Activated CD4-positive, alpha-beta T cell treated with anti-CD3 and anti-CD28 coated beads, Interleukin-2, amount 10 ng/mL, durations not matched to agents 7 days and 5 days (primary cell): ENCODE measurements at regions of chr5 and their contacts with region 1.

Region 1: DNA sequence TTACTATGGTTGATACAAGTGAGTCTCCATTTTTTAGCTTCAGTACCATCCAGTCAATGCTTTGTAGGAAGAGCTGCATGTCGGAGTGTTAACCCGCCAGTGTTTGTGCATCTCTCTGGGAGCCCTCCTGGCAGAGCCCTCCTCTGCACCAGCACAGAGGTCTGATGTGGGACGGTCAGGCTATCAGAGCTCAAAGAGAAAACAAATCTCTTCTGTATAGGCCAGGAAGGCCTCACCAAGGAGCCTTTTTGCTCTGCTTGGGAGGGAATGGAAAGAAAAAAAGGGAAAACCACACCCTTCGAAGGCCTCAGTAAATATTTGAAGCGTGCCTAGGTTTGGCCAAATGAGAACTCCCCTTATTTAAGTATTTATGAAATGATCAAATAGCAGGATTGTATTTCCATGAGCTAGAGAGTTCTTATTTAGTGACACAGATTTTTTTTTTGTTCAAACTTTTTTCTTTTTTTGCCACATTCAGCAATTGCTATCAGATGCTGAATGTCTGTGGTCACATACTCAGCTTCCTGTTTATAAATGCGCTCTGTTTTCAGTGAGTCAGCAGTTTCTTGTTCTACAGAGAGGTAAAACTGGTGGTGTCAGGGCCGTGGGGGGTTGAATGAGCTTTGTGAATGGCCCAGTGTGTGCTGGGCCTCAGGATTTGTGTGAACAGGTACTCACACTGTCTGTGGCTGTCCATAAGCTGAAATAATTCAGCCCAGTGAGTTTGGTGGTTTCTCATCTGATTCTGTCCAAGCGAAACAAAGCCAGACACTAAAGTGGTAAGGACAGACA is 226.6 kb downstream of the SNX18 start:
- DNase-seq: peak; percentile 69
- H3K4me3 Mint-ChIP-seq: no peak overlapping the region
- H3K27ac Mint-ChIP-seq: peak overlapping the region; percentile 77
- H3K4me1 Mint-ChIP-seq: peaks cover 43% of the 10 kb centered on the region
- H3K27me3 Mint-ChIP-seq: peaks cover 6% of the 10 kb centered on the region

Region 2: DNA sequence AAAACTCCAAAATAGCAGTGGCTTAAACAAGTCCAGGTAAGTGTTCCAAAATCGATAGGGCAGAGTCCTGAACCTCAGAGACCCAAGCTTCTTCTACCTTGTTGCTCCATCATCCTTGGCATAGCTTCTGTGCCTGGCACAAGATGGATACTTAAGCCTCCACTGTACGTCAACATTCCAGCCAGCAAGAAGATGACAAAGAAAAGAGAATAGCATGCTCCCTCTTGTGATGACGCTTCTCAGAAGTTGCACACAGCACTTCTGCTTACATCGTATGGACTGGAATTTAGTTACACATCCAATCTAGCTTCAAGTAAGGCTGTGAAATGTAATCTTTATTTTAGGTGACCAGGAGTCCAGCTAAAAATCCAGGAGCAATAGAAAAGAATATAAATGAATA is 13.8 kb after region 1 on chr5:
- CTCF ChIA-PET with region 1: interaction called, 12 read pairs
- POLR2A ChIA-PET with region 1: interaction called, 3 read pairs
- DNase-seq: no peak
- H3K4me3 Mint-ChIP-seq: no peak overlapping the region
- H3K27ac Mint-ChIP-seq: no peak overlapping the region
- H3K4me1 Mint-ChIP-seq: peaks cover 26% of the 10 kb centered on the region
- H3K27me3 Mint-ChIP-seq: peaks cover 5% of the 10 kb centered on the region